ENCODE measurements at regions of chr2 and their contacts with region 1.

Region 1: DNA sequence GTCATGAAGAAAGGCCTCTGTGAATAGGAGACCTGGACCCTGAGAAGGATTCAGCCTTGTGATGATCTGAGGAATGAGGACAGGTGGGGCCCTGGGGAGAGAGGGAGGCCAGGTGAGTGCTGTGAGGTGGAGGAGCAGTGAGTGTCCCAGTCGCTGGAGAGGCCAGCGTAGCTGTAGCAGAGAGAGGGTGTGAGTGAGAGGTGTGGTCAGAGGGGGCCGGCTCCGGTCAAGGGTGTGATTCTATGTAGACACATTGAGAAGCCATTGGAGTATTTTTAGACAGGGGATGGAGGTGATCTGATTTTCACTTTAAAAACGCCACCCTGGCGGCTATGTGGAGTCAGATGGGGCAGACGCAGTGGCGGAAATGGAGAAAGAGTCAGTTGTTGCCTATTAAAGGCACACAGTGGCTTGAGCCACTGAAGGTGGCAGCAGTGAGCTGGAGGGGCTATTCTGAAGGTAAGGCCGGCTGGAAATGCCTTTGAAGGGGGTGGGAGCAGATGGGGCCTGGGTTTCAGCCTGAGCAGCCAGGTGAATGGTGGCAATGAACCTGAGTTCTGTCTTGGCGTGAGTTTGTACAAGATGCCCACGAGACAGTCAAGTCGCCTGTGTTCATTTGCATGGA is 55.6 kb downstream of the GREB1 start:
- DNase-seq: peak in 1 of 4 experiments; percentile 27
- ATAC-seq: peak; percentile 85
- H3K4me3 ChIP-seq: no peak overlapping the region
- H3K27ac ChIP-seq: no peak overlapping the region
- H3K4me1 ChIP-seq: peaks cover 0 to 6% of the 10 kb centered on the region in 2 experiments; a peak in 2 of 5 replicates
- H3K27me3 ChIP-seq: peaks cover 49 to 95% of the 10 kb centered on the region in 2 experiments
- CTCF ChIP-seq: peak; percentile 50 to 60 (median 57); a peak in 4 of 6 replicates
- EP300 ChIP-seq: no peak
- POLR2A ChIP-seq: no peak
- RAD21 ChIP-seq: peak; percentile 42 to 68

Region 2: DNA sequence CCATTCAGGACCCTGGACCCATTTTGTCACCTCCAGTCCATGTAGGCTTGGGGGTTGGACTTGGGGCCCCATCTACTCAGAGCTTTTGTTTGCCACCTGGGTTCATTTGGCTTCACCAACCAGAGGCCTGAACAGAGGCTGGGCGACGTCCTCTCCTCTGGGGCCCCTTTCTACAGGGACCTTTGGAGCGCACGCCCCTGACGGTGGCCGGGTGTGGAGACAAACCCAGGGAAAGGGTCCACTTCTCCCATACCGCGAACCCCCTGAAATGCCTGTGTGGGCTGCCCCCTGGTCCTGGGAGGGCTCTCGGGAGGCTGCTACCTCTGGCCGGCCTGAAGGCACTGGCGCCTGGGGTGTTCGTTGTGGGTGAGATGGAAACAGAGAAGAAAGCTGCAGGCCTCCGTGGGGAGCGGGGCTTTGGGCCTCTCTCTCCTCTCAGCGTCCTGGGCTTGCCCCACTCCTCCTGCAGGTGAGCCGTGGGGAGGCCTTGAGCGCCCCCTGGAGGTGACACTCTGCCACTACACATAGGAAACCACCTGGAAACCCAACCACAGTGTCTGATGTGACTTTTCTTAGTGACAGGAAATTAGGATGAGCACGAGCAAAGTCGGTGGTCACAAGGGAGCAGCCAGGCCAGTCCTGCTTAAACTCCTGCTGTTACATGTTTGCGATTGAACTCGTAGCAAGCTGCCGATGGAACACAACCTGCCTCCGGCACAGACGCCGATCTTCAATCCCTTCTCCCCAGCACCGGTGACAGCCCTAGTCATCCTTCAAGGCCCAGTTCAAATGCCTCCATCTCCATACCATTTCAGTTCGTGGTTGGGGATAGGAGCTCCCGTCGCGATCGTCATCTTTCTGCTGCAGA is 92.5 kb after region 1 on chr2:
- CTCF ChIA-PET with region 1: interaction called, 4 read pairs
- POLR2A ChIA-PET with region 1: interaction called, 3 read pairs
- in situ Hi-C with region 1: no loop called
- intact Hi-C with region 1: loop called (anchors 1 kb)
- DNase-seq: peak; percentile 71 to 91 (median 89)
- ATAC-seq: peak; percentile 93
- H3K4me3 ChIP-seq: no peak overlapping the region
- H3K27ac ChIP-seq: no peak overlapping the region
- H3K4me1 ChIP-seq: peaks cover 0 to 7% of the 10 kb centered on the region in 2 experiments; a peak in 2 of 5 replicates
- H3K27me3 ChIP-seq: peaks cover 26 to 80% of the 10 kb centered on the region in 2 experiments; a peak in 3 of 5 replicates
- CTCF ChIP-seq: peak; percentile 92 to 97 (median 92)
- EP300 ChIP-seq: no peak
- POLR2A ChIP-seq: no peak
- RAD21 ChIP-seq: peak; percentile 73 to 87